ENCODE measurements at regions of chr6 and their contacts with region 1.

Region 1: DNA sequence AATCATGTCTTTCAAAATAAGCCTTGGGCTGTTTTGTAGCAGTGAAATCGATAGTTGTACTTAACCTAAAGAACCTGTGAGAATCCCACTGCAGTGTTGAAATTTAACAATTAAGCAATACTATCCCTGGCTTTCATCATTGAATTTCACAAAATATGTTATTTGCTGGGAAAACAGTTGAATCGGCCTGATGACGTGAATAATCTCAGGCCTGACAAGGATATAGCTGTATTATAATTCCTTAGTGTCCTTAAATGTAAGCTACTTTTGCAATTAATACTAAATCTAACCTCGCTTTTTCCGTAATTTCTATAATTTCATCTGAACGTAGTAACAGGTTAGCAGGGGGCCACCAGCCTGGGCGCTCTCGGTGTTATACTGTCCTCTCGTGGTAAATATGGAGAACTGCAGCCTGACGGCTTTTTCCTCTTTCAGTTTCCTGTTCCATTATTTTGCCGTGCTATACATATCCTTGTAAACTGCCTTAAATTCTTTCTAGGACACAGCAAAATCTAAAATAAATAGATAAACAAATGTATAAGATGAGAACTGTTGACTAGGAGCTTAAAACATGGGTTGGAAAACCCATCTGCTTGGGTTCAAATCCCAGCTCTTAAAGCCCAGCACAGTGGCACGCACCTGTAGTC is 24.0 kb downstream of the MTFR2 start:
- H3K4me3 Mint-ChIP-seq: no peak overlapping the region
- H3K27ac Mint-ChIP-seq: peak overlapping the region; percentile 67
- H3K4me1 Mint-ChIP-seq: peaks cover 53% of the 10 kb centered on the region
- H3K27me3 Mint-ChIP-seq: no peaks in the 10 kb centered on the region

Region 2: DNA sequence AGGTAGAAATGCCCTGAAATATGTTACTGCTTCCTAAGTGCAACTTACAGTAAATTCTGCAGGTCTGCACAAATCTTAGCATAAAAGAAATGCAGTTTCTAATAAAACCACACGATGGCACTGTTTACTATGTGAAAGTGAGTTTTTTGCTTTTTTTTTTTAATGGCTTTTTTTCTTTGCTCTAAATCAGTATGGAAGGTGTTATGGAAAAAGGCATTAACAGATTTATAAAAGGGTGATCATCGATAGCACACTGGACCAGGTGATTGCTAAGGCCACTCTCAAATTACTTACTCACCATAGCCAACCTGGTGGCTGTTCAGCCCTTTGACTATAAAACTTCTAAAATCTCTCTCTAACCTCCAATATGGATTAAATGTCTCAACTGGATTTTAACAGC is 774.5 kb before region 1 on chr6:
- intact Hi-C with region 1: loop called (anchors 2 kb)
- H3K4me3 Mint-ChIP-seq: no peak overlapping the region
- H3K27ac Mint-ChIP-seq: no peak overlapping the region
- H3K4me1 Mint-ChIP-seq: no peaks in the 10 kb centered on the region
- H3K27me3 Mint-ChIP-seq: no peaks in the 10 kb centered on the region

Region 3: DNA sequence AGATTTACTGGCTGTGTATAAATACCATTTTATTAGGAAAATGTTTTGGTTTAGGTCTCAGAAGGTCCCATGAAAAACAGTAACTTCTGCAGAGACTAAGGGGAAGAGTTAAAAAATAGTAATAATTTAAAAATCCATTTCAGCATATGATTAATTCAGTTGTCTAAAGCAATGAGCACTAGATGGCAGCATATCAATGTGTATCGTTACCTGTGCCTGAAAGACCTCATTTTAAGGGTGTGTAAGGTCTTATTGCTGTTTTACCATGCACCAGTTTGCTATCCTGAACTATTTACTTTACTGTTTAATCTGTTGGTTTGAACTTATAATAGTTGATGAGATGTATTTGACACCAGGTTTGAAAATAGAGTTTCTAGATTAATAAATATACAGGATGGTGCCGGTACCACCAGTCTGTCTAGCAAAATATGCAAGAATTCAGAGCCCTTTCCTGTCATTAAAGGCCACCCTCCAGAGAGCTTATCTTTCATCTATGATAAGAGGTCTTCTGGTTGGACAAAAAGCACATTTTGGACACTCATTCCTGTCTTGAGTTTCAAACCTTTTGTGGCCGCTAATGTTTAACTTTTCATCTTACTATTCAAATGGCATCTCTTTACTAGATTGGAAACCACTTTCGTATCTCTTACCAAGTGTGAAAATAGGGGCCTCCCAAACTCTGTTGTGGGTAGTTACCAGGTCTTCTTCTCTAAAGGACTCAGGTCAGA is 719.7 kb before region 1 on chr6:
- intact Hi-C with region 1: loop called (anchors 10 kb)
- H3K4me3 Mint-ChIP-seq: no peak overlapping the region
- H3K27ac Mint-ChIP-seq: no peak overlapping the region
- H3K4me1 Mint-ChIP-seq: no peaks in the 10 kb centered on the region
- H3K27me3 Mint-ChIP-seq: no peaks in the 10 kb centered on the region

Region 4: GRCh38 chr6:135535989-135536414 is 690.1 kb before region 1 on chr6:
- intact Hi-C with region 1: loop called (anchors 1 kb)
- H3K4me3 Mint-ChIP-seq: no peak overlapping the region
- H3K27ac Mint-ChIP-seq: no peak overlapping the region
- H3K4me1 Mint-ChIP-seq: no peaks in the 10 kb centered on the region
- H3K27me3 Mint-ChIP-seq: no peaks in the 10 kb centered on the region

Region 5: GRCh38 chr6:135675862-135676261 is 550.3 kb before region 1 on chr6:
- intact Hi-C with region 1: loop called (anchors 1 kb)
- H3K4me3 Mint-ChIP-seq: no peak overlapping the region
- H3K27ac Mint-ChIP-seq: no peak overlapping the region
- H3K4me1 Mint-ChIP-seq: no peaks in the 10 kb centered on the region
- H3K27me3 Mint-ChIP-seq: no peaks in the 10 kb centered on the region

Region 6: GRCh38 chr6:135909737-135910387 is 316.3 kb before region 1 on chr6:
- intact Hi-C with region 1: loop called (anchors 5 kb)
- H3K4me3 Mint-ChIP-seq: no peak overlapping the region
- H3K27ac Mint-ChIP-seq: no peak overlapping the region
- H3K4me1 Mint-ChIP-seq: no peaks in the 10 kb centered on the region
- H3K27me3 Mint-ChIP-seq: peaks cover 2% of the 10 kb centered on the region

Region 7: GRCh38 chr6:136031982-136032381 is 194.2 kb before region 1 on chr6:
- intact Hi-C with region 1: loop called (anchors 10 kb)
- H3K4me3 Mint-ChIP-seq: no peak overlapping the region
- H3K27ac Mint-ChIP-seq: no peak overlapping the region
- H3K4me1 Mint-ChIP-seq: peaks cover 11% of the 10 kb centered on the region
- H3K27me3 Mint-ChIP-seq: no peaks in the 10 kb centered on the region

Measured in dendritic cell treated with granulocyte-macrophage colony-stimulating factor and Interleukin-4, amounts not matched to agents 40 ng/mL and 50 ng/mL, for 4 days (primary cell).